Mammary epithelial cell (primary cell): ENCODE measurements at regions of chr22 and their contacts with region 1.

Region 1: DNA sequence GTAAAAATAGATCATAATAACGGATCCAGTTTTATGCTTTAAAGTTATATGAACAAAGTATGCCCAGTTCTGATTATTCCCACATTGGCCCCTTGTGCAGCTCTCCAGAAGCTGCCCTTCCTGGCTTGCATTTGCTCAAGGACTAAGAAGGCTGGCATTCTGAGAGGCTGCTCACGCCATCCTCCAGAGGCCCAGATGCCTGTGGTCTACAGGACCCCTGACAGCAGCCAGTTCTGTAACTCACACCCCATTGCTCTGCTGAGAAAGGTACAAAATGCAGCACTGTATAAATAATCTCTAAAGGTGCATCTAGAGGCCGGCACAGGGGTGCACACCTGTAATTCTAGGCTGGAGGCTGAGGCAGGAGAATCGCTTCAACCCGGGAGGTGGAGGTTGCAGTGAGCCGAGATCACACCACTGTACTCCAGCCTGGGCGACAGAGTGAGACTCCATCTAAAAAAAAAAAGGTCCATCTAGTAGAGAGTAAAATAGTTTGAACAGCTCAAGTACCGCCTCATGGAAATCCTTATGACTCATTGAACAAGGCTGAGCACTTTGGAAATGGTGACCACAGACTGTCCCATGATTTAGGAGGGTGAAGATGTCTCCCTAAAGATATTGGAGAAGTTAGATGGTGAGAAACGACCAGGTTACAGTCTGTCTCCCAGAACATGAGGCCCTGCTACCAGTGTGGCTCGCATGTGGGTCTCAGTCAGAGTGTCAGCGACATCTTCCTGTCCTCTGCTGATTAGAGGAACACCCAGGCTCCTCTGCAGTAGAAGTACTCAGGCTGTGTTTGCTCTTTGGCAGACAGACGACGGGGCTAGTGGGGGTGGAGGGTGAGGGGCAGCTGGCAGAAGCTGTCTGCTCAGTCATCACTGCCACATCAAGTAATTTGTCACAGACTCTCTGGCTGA is 56.3 kb downstream of the KREMEN1 start:
- DNase-seq: no peak
- H3K4me3 ChIP-seq: no peak overlapping the region
- H3K27ac ChIP-seq: no peak overlapping the region
- H3K4me1 ChIP-seq: no peaks in the 10 kb centered on the region
- H3K27me3 ChIP-seq: no peaks in the 10 kb centered on the region
- CTCF ChIP-seq: no peak

Region 2: GRCh38 chr22:29072193-29072978 is 56.8 kb before region 1 on chr22:
- CTCF ChIA-PET with region 1: no interaction called
- dilution Hi-C with region 1: loop called (anchors 5 kb)
- in situ Hi-C with region 1: no loop called
- intact Hi-C with region 1: no loop called
- DNase-seq: peak; percentile 89
- H3K4me3 ChIP-seq: peak overlapping the region in 1 of 3 experiments; percentile 76
- H3K27ac ChIP-seq: peak overlapping the region; percentile 51
- H3K4me1 ChIP-seq: peaks cover 28% of the 10 kb centered on the region
- H3K27me3 ChIP-seq: no peaks in the 10 kb centered on the region
- CTCF ChIP-seq: no peak

Region 3: DNA sequence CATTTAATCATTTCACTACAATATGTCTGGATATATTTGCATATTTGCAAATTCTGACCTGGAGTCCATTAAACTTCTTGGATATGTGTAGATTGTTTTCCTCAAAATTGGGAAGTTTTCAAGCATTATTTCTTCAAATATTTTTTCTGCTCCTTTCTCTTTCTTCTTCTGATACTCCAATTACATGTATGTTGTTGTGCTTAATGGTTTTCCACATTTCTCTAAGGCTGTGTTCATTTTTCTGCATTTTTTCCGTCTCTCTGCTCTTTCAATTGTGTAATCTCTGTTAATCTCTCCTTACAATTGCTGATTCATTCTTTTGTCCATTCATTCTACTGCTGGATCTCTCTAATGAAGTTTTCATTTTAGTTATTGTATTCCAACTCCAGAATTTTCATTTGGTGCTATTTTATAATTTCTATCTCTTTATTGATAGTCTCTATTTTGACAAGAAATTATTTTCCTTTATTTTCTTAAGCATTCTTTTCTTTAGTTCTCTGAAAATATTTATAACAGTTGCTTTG is 46.2 kb after region 1 on chr22:
- CTCF ChIA-PET with region 1: interaction called, 12 read pairs
- dilution Hi-C with region 1: no loop called
- in situ Hi-C with region 1: no loop called
- intact Hi-C with region 1: no loop called
- DNase-seq: no peak
- H3K4me3 ChIP-seq: no peak overlapping the region
- H3K27ac ChIP-seq: no peak overlapping the region
- H3K4me1 ChIP-seq: no peaks in the 10 kb centered on the region
- H3K27me3 ChIP-seq: no peaks in the 10 kb centered on the region
- CTCF ChIP-seq: no peak